CD8-positive, alpha-beta memory T cell (primary cell): ENCODE measurements at regions of chr16 and their contacts with region 1.

Region 1: GRCh38 chr16:47037746-47038458 is 64.4 kb upstream of the DNAJA2 start:
- DNase-seq: peak; percentile 79 to 89 (median 83)
- H3K4me3 ChIP-seq: peak overlapping the region; percentile 60
- H3K4me3 Mint-ChIP-seq: peak overlapping the region; percentile 61 to 89 (median 79)
- H3K27ac ChIP-seq: no peak overlapping the region
- H3K27ac Mint-ChIP-seq: peak overlapping the region in 1 of 8 donors; percentile 70
- H3K4me1 ChIP-seq: peaks cover 7% of the 10 kb centered on the region
- H3K4me1 Mint-ChIP-seq: peaks cover 0 to 4% (median 2%) of the 10 kb centered on the region in 3 donors
- H3K27me3 ChIP-seq: no peaks in the 10 kb centered on the region
- H3K27me3 Mint-ChIP-seq: peaks cover 0 to 1% of the 10 kb centered on the region in 2 donors

Region 2: DNA sequence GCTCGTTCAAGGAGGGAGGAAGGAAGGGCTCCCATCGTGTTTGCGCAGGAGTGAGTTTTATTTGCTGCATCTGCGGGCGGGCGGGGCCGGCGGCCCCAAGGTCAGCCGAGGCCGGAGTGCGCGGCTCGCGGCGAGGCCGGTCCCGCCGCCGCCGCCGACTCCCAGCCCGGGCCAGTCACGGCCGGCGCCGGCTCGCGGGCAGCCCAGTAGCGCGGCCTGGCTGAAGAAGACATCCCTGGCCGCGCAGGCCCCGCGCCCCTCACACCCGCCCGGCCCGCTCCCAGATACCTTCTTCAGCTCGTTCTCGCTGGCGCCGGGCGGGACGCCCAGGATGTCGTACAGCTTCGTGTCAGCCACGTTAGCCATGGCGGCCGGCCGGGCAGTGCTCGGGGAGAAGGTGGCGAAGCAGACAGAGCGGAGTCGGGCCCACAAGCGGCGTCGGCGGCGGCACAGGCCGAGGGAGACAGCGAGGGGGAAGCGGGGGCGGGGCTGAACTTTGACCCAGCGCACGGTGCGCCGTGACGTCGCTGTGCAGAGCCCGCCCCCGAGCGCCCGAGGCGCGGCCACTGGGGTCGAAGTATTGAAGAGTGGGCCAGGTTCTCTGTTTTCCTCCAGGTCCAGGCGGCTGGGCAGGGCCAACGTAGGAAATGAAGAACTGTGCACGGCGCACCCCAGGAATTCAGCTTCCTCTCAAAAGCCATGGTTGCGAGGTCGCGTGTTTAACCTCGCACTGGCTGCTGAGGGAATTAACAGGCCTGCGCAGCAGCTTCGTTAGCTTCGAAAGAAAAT is 64.5 kb before region 1 on chr16 and contains the start of gene DNAJA2:
- CTCF ChIA-PET with region 1: interaction called, 14 read pairs
- POLR2A ChIA-PET with region 1: no interaction called
- DNase-seq: peak; percentile 89 to 93 (median 92)
- H3K4me3 ChIP-seq: peak within 1 kb of the TSS; percentile 83
- H3K4me3 Mint-ChIP-seq: peak within 1 kb of the TSS; percentile 83 to 99 (median 92)
- H3K27ac ChIP-seq: peak within 1 kb of the TSS; percentile 87
- H3K27ac Mint-ChIP-seq: peak within 1 kb of the TSS; percentile 89 to 100 (median 99)
- H3K4me1 ChIP-seq: peaks cover 40% of the 10 kb centered on the region
- H3K4me1 Mint-ChIP-seq: peaks cover 52 to 65% (median 63%) of the 10 kb centered on the region in 3 donors
- H3K27me3 ChIP-seq: no peaks in the 10 kb centered on the region
- H3K27me3 Mint-ChIP-seq: peaks cover 0 to 1% of the 10 kb centered on the region in 2 donors
- total RNA-seq, gene DNAJA2: 89.8 to 90.3 TPM

Region 3: GRCh38 chr16:47125757-47126156 is 87.9 kb after region 1 on chr16:
- CTCF ChIA-PET with region 1: no interaction called
- POLR2A ChIA-PET with region 1: no interaction called
- DNase-seq: no peak
- H3K4me3 ChIP-seq: no peak overlapping the region
- H3K4me3 Mint-ChIP-seq: no peak overlapping the region
- H3K27ac ChIP-seq: no peak overlapping the region
- H3K27ac Mint-ChIP-seq: no peak overlapping the region
- H3K4me1 ChIP-seq: no peaks in the 10 kb centered on the region
- H3K4me1 Mint-ChIP-seq: no peaks in the 10 kb centered on the region
- H3K27me3 ChIP-seq: no peaks in the 10 kb centered on the region
- H3K27me3 Mint-ChIP-seq: peaks cover 0 to 2% of the 10 kb centered on the region in 2 donors

Region 4: DNA sequence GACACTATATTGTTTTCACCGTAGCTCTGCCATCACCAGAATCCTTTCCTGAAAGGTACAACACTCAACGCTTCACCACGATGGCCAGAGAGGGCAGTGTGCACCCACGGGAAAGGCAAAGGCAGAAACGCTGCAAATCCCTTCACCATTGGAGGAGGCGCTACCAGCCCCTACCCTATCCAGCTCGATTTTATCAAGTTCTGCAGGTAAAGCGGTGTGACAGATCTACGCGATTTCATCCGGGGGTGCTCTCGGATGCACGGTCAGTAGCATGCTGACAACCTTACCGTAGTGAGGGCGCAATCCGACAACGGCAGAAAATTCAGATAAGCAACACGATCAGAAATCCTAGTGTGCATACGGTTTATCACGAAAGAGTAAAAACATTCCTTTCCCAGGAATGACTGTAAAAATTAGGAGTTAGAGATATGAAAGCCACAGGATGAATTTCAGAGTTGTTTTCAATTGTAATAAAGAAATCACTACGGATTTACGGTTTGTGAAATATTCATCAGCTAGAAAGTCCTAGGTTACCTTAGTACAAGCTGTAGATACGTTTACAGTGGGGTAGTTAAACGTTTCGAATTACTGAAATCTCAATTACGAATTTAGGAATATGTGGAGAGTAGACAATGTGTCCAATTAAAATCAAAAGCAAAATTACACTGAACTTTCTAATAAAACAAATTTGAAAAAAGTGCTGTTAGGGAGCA is 104.0 kb after region 1 on chr16:
- CTCF ChIA-PET with region 1: interaction called, 15 read pairs
- POLR2A ChIA-PET with region 1: no interaction called
- DNase-seq: peak; percentile 71 to 86 (median 71)
- H3K4me3 ChIP-seq: peak overlapping the region; percentile 42
- H3K4me3 Mint-ChIP-seq: peak overlapping the region; percentile 87 to 91 (median 89)
- H3K27ac ChIP-seq: no peak overlapping the region
- H3K27ac Mint-ChIP-seq: peak overlapping the region in 7 of 8 donors; percentile 2 to 76 (median 53)
- H3K4me1 ChIP-seq: peaks cover 16% of the 10 kb centered on the region
- H3K4me1 Mint-ChIP-seq: peaks cover 16 to 19% (median 17%) of the 10 kb centered on the region in 3 donors
- H3K27me3 ChIP-seq: no peaks in the 10 kb centered on the region
- H3K27me3 Mint-ChIP-seq: peaks cover 12 to 16% of the 10 kb centered on the region in 2 donors

Region 5: GRCh38 chr16:48156790-48157209 is 1118.9 kb after region 1 on chr16:
- CTCF ChIA-PET with region 1: interaction called, 15 read pairs
- POLR2A ChIA-PET with region 1: no interaction called
- DNase-seq: peak; percentile 57 to 78 (median 70)
- H3K4me3 ChIP-seq: no peak overlapping the region
- H3K4me3 Mint-ChIP-seq: no peak overlapping the region
- H3K27ac ChIP-seq: no peak overlapping the region
- H3K27ac Mint-ChIP-seq: no peak overlapping the region
- H3K4me1 ChIP-seq: no peaks in the 10 kb centered on the region
- H3K4me1 Mint-ChIP-seq: peaks cover 0 to 6% (median 2%) of the 10 kb centered on the region in 3 donors
- H3K27me3 ChIP-seq: no peaks in the 10 kb centered on the region
- H3K27me3 Mint-ChIP-seq: peaks cover 11 to 29% of the 10 kb centered on the region in 2 donors

Region 6: DNA sequence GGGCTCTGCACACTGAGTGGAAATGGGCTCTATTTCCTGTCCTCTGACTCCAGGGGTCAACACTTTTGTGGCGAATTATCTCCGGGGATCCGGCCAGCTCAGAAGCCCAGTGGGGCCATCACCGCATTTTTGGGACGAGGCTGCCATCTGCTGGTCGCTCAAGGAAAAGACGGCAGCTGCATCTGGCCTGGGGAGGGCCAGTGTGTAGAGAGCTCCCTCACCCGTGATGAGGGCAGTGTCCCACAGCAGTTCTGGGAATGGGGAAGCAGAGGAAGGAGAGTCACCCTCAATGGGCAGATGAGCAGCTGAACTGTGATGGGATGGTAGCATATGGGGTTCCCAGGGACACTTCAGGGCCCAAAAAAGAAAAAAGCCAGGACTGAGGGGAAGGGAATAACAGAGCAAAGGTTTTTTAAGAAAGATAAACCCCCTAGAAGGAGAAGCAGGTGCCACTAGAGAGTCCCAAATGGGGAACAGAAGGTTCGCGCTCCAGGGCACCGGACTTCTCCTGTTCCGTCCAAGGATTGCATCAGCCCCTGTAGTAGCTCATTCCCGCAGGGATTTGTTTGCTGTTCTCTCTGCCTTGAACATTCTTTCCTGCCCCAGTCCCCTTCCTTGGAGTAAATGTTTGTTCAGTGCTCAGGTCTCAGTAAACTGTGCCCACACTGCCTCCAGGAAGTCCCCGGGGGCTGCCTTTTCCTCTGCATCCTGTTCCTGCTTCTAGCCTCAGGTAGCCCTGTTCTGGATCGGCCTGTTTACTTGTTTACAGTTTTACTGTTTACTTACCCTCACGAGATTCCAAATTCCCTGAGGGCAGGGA is 1127.2 kb after region 1 on chr16:
- CTCF ChIA-PET with region 1: interaction called, 18 read pairs
- POLR2A ChIA-PET with region 1: no interaction called
- DNase-seq: peak; percentile 34 to 65 (median 45)
- H3K4me3 ChIP-seq: no peak overlapping the region
- H3K4me3 Mint-ChIP-seq: no peak overlapping the region
- H3K27ac ChIP-seq: no peak overlapping the region
- H3K27ac Mint-ChIP-seq: peak overlapping the region in 1 of 8 donors; percentile 5
- H3K4me1 ChIP-seq: no peaks in the 10 kb centered on the region
- H3K4me1 Mint-ChIP-seq: peaks cover 0 to 5% (median 3%) of the 10 kb centered on the region in 3 donors
- H3K27me3 ChIP-seq: no peaks in the 10 kb centered on the region
- H3K27me3 Mint-ChIP-seq: peaks cover 0 to 4% of the 10 kb centered on the region in 2 donors